Naive thymus-derived CD8-positive, alpha-beta T cell (primary cell): ENCODE measurements at regions of chr21 and their contacts with region 1.

Region 1: GRCh38 chr21:33976082-33977016 is 60.7 kb upstream of the ATP5PO start:
- DNase-seq: peak in 7 of 10 donors; percentile 32 to 68 (median 37)
- ATAC-seq: peak; percentile 61 to 83
- H3K4me3 Mint-ChIP-seq: peak overlapping the region; percentile 47 to 85 (median 72)
- H3K27ac Mint-ChIP-seq: peak overlapping the region; percentile 79 to 97 (median 90)
- H3K4me1 Mint-ChIP-seq: peaks cover 34 to 65% (median 57%) of the 10 kb centered on the region in 4 donors
- H3K27me3 Mint-ChIP-seq: no peaks in the 10 kb centered on the region

Region 2: DNA sequence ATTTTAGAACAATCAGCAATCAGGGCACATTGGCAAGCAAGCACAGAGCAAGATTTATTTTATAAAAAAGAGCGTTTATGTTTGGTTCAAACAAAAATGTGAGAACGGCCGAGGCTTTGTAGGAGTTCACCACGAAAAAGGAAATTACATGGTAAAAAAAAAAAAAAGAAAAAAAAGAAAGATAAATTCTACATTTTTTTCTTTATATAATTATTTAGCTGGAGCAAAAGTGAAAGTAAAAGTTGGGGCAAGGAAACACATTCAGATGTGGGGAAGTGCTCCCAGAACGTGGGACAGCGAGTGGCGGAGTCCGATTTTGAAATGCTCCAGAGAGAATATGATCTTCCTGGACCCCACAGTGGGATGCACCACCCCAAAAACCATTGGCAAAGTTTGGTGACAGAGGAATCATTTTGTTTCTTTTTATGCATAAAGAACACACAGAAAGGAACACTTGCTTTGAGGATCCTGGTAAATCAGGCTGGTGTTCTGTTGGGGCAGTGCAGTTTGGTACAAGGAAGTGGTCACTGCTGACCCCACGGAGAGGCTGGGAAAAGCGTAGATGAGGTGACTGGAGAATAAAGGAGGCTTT is 44.5 kb before region 1 on chr21:
- POLR2A ChIA-PET with region 1: interaction called, 13 read pairs
- DNase-seq: peak in 1 of 10 donors; percentile 77
- ATAC-seq: peak; percentile 11 to 24
- H3K4me3 Mint-ChIP-seq: peak overlapping the region; percentile 92 to 100 (median 98)
- H3K27ac Mint-ChIP-seq: peak overlapping the region; percentile 97 to 100 (median 100)
- H3K4me1 Mint-ChIP-seq: peaks cover 17 to 49% (median 40%) of the 10 kb centered on the region in 4 donors
- H3K27me3 Mint-ChIP-seq: no peaks in the 10 kb centered on the region

Region 3: DNA sequence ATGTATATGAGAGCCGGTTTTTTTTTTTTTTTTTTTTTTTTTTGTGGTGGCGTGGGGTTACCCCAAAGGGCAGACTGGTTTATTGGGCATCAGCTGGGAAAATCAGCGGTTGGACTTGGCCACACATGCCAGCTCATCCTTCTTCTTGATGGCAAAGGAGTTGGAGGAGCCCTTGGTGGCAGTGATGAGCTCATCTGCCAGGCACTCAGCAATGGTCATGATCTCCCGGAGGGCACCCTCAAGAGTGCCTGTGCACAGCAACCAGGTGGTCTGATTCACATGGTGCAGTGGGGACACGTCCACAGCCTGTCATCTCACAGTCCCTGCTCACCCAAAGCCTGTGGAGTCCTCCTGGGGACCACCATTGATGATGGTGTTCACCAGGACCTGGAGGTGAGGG is 159.0 kb after region 1 on chr21:
- POLR2A ChIA-PET with region 1: no interaction called
- DNase-seq: no peak
- ATAC-seq: no peak
- H3K4me3 Mint-ChIP-seq: no peak overlapping the region
- H3K27ac Mint-ChIP-seq: peak overlapping the region in 2 of 10 donors; percentile 24 to 29
- H3K4me1 Mint-ChIP-seq: peaks cover 41 to 65% (median 59%) of the 10 kb centered on the region in 4 donors
- H3K27me3 Mint-ChIP-seq: no peaks in the 10 kb centered on the region